ENCODE measurements at regions of chr4 and their contacts with region 1.

Region 1: GRCh38 chr4:74631338-74631737 is 163.0 kb downstream of the BTC start:
- DNase-seq: peak in 1 of 2 experiments; percentile 55
- ATAC-seq: peak; percentile 72 to 85
- H3K4me3 ChIP-seq: no peak overlapping the region
- H3K27ac ChIP-seq: peak overlapping the region; percentile 92 to 96
- H3K4me1 ChIP-seq: peaks cover 56% of the 10 kb centered on the region
- CTCF ChIP-seq: no peak
- EP300 ChIP-seq: peak in 1 of 2 experiments; percentile 49; a peak in 1 of 5 replicates
- POLR2A ChIP-seq: no peak
- RAD21 ChIP-seq: no peak

Region 2: GRCh38 chr4:74654230-74654681 is 22.9 kb after region 1 on chr4:
- CTCF ChIA-PET with region 1: interaction called, 5 read pairs
- POLR2A ChIA-PET with region 1: interaction called, 15 read pairs
- DNase-seq: peak; percentile 59 to 99
- ATAC-seq: peak; percentile 95 to 96
- H3K4me3 ChIP-seq: peak overlapping the region; percentile 24; the same call in 1 of the 3 replicates
- H3K27ac ChIP-seq: peak overlapping the region; percentile 99 to 100
- H3K4me1 ChIP-seq: peaks cover 60% of the 10 kb centered on the region
- CTCF ChIP-seq: no peak
- EP300 ChIP-seq: peak; percentile 100
- POLR2A ChIP-seq: no peak
- RAD21 ChIP-seq: peak; percentile 59 to 70